HepG2 (cell line): ENCODE measurements at regions of chr19 and their contacts with region 1.

Region 1: DNA sequence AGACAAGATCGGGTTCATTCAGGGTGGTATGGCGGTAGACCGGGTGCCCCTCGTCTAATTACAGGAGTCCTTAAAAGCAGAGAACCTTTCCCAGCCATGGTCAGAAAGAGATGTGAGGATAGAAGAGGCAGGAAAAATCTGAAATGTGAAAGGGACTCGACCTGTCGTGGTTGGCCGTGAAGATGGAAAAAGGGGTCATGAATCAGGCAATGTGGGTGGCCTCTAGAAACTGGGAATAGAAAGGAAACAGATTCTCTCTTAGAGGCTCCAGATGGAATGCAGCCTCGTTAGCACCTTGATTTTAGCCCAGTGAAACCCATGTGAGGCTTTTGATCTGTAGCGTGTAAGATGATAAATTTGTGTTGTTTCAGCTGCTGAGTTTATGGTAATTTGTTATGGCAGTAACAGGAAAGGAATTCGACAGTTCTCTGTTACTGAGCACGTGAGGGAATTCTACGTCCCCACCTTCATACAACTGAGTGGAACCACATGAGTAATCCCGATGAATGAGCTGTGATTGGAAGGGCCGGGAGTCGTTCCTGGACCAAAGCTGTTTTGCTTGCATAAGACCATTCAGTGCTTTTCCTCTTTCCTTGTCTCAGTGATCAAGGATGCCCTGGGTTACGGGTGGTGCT is 11.0 kb upstream of the CA11 start:
- DNase-seq: no peak
- ATAC-seq: no peak
- H3K4me3 ChIP-seq: no peak overlapping the region
- H3K27ac ChIP-seq: no peak overlapping the region
- H3K4me1 ChIP-seq: peaks cover 2% of the 10 kb centered on the region; the same call in 1 of the 2 replicates
- H3K27me3 ChIP-seq: no peaks in the 10 kb centered on the region
- CTCF ChIP-seq: no peak
- EP300 ChIP-seq: no peak
- POLR2A ChIP-seq: no peak
- RAD21 ChIP-seq: no peak

Region 2: GRCh38 chr19:48596679-48597465 is 60.1 kb before region 1 on chr19:
- CTCF ChIA-PET with region 1: no interaction called
- POLR2A ChIA-PET with region 1: no interaction called
- in situ Hi-C with region 1: no loop called
- intact Hi-C with region 1: no loop called
- DNase-seq: no peak
- ATAC-seq: no peak
- H3K4me3 ChIP-seq: no peak overlapping the region
- H3K27ac ChIP-seq: no peak overlapping the region
- H3K4me1 ChIP-seq: peaks cover 15% of the 10 kb centered on the region; the same call in 1 of the 2 replicates
- H3K27me3 ChIP-seq: peaks cover 0 to 12% of the 10 kb centered on the region in 2 experiments; a peak in 3 of 5 replicates
- CTCF ChIP-seq: no peak
- EP300 ChIP-seq: no peak
- POLR2A ChIP-seq: no peak
- RAD21 ChIP-seq: no peak

Region 3: DNA sequence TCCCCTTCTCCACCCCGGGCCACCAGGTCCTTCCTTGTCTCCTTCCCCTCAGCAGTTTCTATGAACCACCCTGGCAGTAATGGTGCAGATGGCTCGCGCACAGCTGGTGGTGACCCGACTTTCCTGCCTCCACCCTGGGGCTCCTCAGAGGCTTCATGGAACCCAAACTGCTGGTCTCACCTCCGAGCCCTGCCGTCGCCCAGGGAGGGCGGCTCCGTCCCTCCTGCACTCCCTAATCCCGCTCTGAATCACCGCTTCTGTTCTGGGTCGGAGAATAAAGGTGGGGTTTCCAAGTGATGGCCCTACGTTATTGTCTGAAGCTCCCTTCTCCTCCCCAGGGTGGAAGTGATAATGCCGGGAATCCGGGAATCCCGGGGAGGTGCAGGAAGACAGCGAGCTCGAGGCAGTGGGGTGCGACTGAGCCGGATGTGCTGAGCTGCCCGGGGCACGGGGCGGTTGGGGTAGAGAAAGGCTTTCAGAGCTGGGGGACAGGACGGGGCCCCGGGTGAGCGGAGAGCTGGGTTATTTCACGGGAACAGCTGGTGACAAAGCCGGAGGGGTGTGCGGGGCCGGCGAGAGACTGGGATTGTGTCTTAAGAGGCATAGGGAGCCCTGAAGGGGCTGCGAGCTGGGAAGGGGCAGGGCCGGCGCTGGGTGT is 39.5 kb after region 1 on chr19:
- CTCF ChIA-PET with region 1: no interaction called
- POLR2A ChIA-PET with region 1: no interaction called
- in situ Hi-C with region 1: no loop called
- intact Hi-C with region 1: loop called (anchors 1 kb)
- DNase-seq: no peak
- ATAC-seq: no peak; the same call in 2 of the 3 replicates
- H3K4me3 ChIP-seq: peak overlapping the region in 1 of 3 experiments; percentile 50; a peak in 1 of 6 replicates
- H3K27ac ChIP-seq: no peak overlapping the region
- H3K4me1 ChIP-seq: peaks cover 35% of the 10 kb centered on the region
- H3K27me3 ChIP-seq: peaks cover 0 to 3% of the 10 kb centered on the region in 2 experiments; a peak in 1 of 5 replicates
- CTCF ChIP-seq: no peak
- EP300 ChIP-seq: no peak
- POLR2A ChIP-seq: no peak
- RAD21 ChIP-seq: no peak

Region 4: GRCh38 chr19:49042177-49042576 is 385.2 kb after region 1 on chr19:
- CTCF ChIA-PET with region 1: no interaction called
- POLR2A ChIA-PET with region 1: no interaction called
- in situ Hi-C with region 1: no loop called
- intact Hi-C with region 1: no loop called
- DNase-seq: no peak
- ATAC-seq: no peak
- H3K4me3 ChIP-seq: no peak overlapping the region
- H3K27ac ChIP-seq: no peak overlapping the region
- H3K4me1 ChIP-seq: no peaks in the 10 kb centered on the region
- H3K27me3 ChIP-seq: peaks cover 1 to 5% of the 10 kb centered on the region in 2 experiments; a peak in 2 of 5 replicates
- CTCF ChIP-seq: no peak
- EP300 ChIP-seq: no peak
- POLR2A ChIP-seq: no peak
- RAD21 ChIP-seq: no peak